PC-3 (cell line): ENCODE measurements at regions of chr4 and their contacts with region 1.

Region 1: DNA sequence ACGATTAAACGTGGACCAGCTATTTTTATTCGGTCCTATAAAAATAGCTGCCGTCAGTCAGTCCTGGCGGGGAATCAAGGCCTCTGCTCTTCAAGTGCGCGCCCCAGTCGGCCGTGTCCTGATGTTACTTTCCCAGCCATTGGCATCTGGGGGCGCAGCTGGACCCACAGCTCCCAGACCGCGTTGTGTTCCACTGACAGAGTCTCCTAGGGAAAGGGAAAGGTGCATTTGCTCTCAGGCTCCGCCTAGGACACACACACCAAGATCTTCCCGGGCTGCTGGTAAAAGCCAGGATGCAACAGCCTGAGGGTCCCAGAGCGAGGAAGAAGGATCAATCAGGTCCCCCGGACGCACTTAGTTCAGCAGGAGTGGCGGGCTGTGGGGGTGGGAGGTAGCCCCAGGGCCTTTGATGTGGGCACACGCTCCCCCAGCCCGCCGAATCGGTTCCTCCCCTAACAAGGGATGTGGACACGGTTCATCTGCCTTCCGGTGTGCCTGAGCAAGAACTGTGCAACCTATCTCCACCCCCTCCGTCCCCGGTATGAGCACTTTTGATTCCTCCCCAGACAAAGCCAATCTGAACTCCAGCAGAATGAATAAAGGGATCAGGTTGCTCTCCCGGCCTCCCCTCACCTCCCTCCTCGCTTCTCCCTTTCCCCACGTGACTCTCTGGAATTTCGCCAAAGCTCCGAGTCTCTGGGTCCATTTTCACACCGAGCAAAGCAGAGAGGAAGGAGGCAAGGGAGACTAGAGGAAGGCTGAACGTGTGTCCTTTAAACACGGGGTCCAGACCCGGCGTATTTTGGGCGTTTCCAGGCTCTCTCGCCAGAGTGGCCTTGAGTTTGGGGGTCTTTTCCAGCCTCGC is 626 bp upstream of the FRAS1 start:
- DNase-seq: peak; percentile 92
- ATAC-seq: peak; percentile 72
- H3K4me3 ChIP-seq: peak overlapping the region; percentile 89
- H3K27ac ChIP-seq: peak overlapping the region; percentile 43
- H3K4me1 ChIP-seq: peaks cover 4% of the 10 kb centered on the region; the same call in 1 of the 2 replicates
- H3K27me3 ChIP-seq: peaks cover 13% of the 10 kb centered on the region; the same call in 1 of the 2 replicates
- CTCF ChIP-seq: peak; percentile 35; the same call in 1 of the 2 replicates

Region 2: DNA sequence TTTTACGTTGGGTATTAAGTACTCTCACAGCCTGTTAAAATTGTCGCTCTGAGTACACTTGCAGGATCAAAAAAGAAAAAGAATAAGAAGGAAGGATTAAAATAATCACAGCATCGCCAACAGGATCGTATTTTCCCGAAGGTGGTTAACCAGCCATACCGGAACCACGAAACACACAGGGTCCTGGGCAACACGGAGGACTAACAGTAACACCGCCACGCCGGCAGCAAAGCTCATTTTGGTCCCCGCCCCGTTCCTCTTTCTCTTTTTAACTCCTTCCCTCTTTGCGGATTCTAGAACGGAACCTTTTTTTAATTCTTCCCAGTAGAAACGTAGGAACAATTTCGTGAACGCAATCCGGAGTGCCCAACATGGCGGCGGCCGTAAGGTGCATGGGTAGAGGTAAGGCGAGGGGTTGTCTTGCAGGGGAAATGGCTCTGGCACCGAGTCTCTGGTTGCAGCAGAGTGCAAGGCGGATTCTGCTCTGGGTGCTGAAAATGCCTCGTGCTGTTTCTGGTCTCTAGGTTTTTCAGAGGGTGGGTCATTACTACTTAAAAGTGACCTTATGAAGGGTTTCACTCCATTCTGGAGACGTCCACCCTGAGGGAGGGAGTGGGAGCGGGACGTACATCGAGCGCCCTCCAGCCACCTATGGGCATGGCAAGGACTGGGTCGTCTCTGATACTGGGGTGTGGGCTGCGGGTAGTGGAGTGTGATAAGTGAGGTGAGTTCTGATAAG is 193.8 kb before region 1 on chr4 and contains the start of gene MRPL1:
- CTCF ChIA-PET with region 1: no interaction called
- POLR2A ChIA-PET with region 1: no interaction called
- intact Hi-C with region 1: loop called (anchors 5 kb)
- DNase-seq: peak; percentile 94
- ATAC-seq: peak; percentile 84
- H3K4me3 ChIP-seq: peak within 1 kb of the TSS; percentile 89
- H3K27ac ChIP-seq: peak within 1 kb of the TSS; percentile 83
- H3K4me1 ChIP-seq: peaks cover 16% of the 10 kb centered on the region; the same call in 1 of the 2 replicates
- H3K27me3 ChIP-seq: no peaks in the 10 kb centered on the region
- CTCF ChIP-seq: peak; percentile 17; the same call in 1 of the 2 replicates
- total RNA-seq, gene MRPL1: 16.7 and 23.0 TPM in 2 replicates

Region 3: DNA sequence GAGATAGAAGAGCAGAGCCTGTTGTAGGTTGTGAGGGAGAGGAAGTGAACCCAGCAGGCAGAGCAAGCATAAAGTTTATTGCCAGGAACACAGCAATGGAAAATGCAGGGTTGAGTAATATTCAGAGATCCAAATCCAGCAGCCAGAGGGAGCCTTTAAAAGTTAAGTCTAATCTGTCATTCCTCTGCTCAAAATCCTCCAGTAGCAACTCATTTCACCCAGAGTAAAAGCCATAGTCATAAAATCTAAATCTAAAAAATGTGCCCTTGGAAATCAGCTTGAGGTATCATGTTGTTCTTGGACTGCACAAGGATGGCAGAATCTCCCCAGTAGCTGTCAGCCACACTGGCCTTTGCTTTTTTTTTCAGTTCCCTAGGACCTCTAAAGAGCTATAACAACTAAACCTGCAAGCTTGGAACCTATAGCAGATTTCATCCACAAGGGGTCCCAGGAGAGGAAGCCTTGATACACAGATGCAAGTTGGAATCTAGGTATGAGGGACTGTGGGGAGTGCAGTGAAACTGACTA is 62.2 kb before region 1 on chr4:
- CTCF ChIA-PET with region 1: interaction called, 6 read pairs
- POLR2A ChIA-PET with region 1: interaction called, 5 read pairs
- intact Hi-C with region 1: loop called (anchors 2 kb)
- DNase-seq: peak; percentile 67
- ATAC-seq: peak; percentile 94
- H3K4me3 ChIP-seq: no peak overlapping the region
- H3K27ac ChIP-seq: no peak overlapping the region
- H3K4me1 ChIP-seq: no peaks in the 10 kb centered on the region
- H3K27me3 ChIP-seq: no peaks in the 10 kb centered on the region
- CTCF ChIP-seq: peak; percentile 69

Region 4: GRCh38 chr4:78493731-78494130 is 437.2 kb after region 1 on chr4:
- CTCF ChIA-PET with region 1: no interaction called
- POLR2A ChIA-PET with region 1: no interaction called
- intact Hi-C with region 1: no loop called
- DNase-seq: no peak
- ATAC-seq: no peak
- H3K4me3 ChIP-seq: no peak overlapping the region
- H3K27ac ChIP-seq: no peak overlapping the region
- H3K4me1 ChIP-seq: no peaks in the 10 kb centered on the region
- H3K27me3 ChIP-seq: no peaks in the 10 kb centered on the region
- CTCF ChIP-seq: no peak

Region 5: GRCh38 chr4:78517050-78517652 is 460.7 kb after region 1 on chr4:
- CTCF ChIA-PET with region 1: interaction called, 5 read pairs
- POLR2A ChIA-PET with region 1: no interaction called
- intact Hi-C with region 1: loop called (anchors 1 kb)
- DNase-seq: peak; percentile 61
- ATAC-seq: no peak; the same call in 1 of the 2 replicates
- H3K4me3 ChIP-seq: no peak overlapping the region
- H3K27ac ChIP-seq: no peak overlapping the region
- H3K4me1 ChIP-seq: no peaks in the 10 kb centered on the region
- H3K27me3 ChIP-seq: no peaks in the 10 kb centered on the region
- CTCF ChIP-seq: peak; percentile 70

Region 6: GRCh38 chr4:78569291-78569821 is 512.9 kb after region 1 on chr4:
- CTCF ChIA-PET with region 1: interaction called, 4 read pairs
- POLR2A ChIA-PET with region 1: interaction called, 6 read pairs
- intact Hi-C with region 1: loop called (anchors 5 kb)
- DNase-seq: peak; percentile 92
- ATAC-seq: peak; percentile 70
- H3K4me3 ChIP-seq: peak overlapping the region; percentile 40; the same call in 1 of the 2 replicates
- H3K27ac ChIP-seq: peak overlapping the region; percentile 49
- H3K4me1 ChIP-seq: peaks cover 54% of the 10 kb centered on the region
- H3K27me3 ChIP-seq: no peaks in the 10 kb centered on the region
- CTCF ChIP-seq: no peak